ENCODE measurements at regions of chr13 and their contacts with region 1.

Region 1: DNA sequence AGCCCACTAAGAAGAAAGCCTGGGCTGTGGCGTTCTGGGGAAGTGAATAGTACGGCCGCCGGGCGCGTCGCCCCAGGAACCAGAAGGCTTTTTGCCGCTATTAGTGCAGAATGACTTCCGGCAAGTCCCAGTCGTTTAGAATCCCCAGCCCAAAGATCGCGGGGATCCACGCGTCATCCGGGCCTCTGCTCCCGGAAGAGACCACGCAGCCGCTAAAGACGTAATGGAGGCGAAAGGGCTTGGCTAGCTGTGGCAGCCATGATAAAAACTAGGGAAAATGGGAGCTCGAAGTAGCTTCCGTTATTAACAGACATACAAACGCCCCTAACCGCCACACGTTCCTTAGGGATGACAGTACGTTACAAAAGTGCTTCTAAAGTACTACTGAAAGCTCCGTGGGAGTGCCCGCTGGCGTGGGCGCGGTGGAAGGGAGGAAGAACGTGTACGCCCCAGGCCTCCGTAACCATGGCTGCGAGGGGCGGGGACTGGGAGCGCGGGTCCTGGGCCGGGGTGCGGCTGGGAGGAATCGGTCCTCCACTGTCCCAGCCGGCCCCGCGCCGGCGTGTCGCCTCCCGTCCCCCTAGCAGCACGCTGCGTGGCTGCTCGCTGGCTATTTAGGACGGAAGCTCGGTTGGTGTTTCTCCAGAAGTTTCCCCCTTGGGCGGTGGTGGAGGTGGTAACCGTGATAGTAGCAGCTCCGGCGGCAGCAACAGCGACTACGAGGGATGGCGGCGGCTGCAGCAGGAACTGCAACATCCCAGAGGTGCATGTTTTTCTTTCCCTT is at the start of gene SUGT1:
- DNase-seq: peak; percentile 97
- H3K4me3 Mint-ChIP-seq: no peak within 1 kb of the TSS
- H3K27ac Mint-ChIP-seq: no peak within 1 kb of the TSS
- H3K4me1 Mint-ChIP-seq: peaks cover 13% of the 10 kb centered on the region
- H3K27me3 Mint-ChIP-seq: no peaks in the 10 kb centered on the region

Region 2: DNA sequence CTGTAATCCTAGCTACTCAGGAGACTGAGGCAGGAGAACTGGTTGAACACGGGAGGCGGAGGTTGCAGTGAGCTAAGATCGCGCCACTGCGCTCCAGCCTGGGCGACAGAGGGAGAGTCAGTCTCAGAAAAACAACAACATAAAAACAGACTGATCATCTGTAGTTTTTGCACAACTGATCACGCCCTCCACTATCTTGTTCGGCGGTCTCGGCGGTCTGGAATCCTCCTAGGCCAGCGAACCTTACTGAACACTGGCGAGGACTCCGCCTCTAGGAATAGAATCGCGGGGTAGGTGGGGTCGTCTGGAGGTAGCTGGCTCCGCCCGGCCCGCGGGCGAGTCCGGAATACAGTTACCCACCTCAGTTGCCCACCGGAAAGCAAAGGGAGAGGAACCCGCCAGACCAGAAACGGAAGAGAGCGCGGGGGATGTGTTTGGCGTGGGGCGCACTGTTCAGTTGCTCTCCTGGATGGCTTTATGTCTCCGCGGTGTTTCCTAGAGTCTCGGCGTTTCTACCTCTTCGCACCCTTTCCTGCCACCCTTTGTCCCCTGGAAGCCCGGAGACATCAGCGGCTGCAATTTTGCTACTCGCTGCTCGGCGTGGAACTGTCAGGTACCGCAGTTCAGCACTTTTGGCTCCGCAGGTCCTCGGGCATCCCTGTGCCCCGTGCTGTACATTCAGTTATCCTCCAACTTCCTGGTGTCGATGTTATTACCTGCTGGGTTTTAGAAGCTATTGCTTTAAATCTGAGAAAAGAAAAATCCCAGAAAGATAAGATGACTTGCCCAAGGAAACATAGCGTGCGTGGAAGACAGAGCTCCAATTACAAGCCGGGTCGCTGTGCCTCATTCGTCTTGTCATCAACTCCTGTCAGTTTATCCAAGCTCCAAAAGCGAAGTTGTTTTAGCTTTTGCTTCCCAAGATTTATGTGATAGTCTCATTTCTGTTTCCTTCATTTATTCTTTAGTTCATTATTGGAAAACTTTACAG is 35.0 kb before region 1 on chr13:
- CTCF ChIA-PET with region 1: interaction called, 20 read pairs
- DNase-seq: peak; percentile 90
- H3K4me3 Mint-ChIP-seq: peak overlapping the region; percentile 99
- H3K27ac Mint-ChIP-seq: peak overlapping the region; percentile 95
- H3K4me1 Mint-ChIP-seq: peaks cover 32% of the 10 kb centered on the region
- H3K27me3 Mint-ChIP-seq: peaks cover 8% of the 10 kb centered on the region

Measured in activated naive CD4-positive, alpha-beta T cell treated with anti-CD3 and anti-CD28 coated beads, Interleukin-2, amount 10 ng/mL, durations not matched to agents 7 days and 5 days (primary cell).